Natural killer cell (primary cell): ENCODE measurements at regions of chr10 and their contacts with region 1.

Region 1: GRCh38 chr10:122980209-122981065 is at the start of gene PSTK:
- DNase-seq: peak; percentile 92 to 96
- ATAC-seq: peak; percentile 95 to 98 (median 95)
- H3K4me3 ChIP-seq: peak within 1 kb of the TSS; percentile 88
- H3K4me3 Mint-ChIP-seq: peak within 1 kb of the TSS; percentile 90
- H3K27ac ChIP-seq: peak within 1 kb of the TSS; percentile 94
- H3K27ac Mint-ChIP-seq: peak within 1 kb of the TSS; percentile 90 to 93
- H3K4me1 ChIP-seq: peaks cover 12% of the 10 kb centered on the region
- H3K4me1 Mint-ChIP-seq: peaks cover 16 to 17% of the 10 kb centered on the region in 2 donors
- H3K27me3 ChIP-seq: no peaks in the 10 kb centered on the region
- H3K27me3 Mint-ChIP-seq: peaks cover 9 to 15% of the 10 kb centered on the region in 2 donors
- CTCF ChIP-seq: peak; percentile 95
- total RNA-seq, gene PSTK: 10.6 to 13.8 (median 13.7) TPM

Region 2: DNA sequence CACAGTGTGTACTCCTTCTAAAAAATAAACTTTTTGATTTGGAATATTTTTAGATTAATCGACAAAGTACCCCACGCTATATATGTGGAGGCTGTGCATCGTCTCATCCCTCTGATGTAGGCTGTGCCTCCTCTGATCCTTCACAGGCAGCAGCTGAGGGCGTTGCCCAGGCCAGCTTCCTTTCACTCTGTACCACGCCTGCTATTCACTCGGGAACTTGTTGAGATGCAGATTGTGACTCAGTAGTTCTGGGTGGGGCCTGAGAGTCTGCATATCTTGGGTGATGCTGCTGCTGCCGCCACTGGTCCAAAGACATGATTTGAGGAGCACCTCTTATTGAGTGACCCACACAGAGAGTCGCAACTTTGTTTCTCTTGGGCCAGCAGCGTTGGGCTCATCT is 272.9 kb before region 1 on chr10:
- intact Hi-C with region 1: no loop called
- DNase-seq: no peak
- ATAC-seq: no peak
- H3K4me3 ChIP-seq: no peak overlapping the region
- H3K4me3 Mint-ChIP-seq: no peak overlapping the region
- H3K27ac ChIP-seq: no peak overlapping the region
- H3K27ac Mint-ChIP-seq: no peak overlapping the region
- H3K4me1 ChIP-seq: no peaks in the 10 kb centered on the region
- H3K4me1 Mint-ChIP-seq: peaks cover 0 to 5% of the 10 kb centered on the region in 2 donors
- H3K27me3 ChIP-seq: peaks cover 2% of the 10 kb centered on the region
- H3K27me3 Mint-ChIP-seq: peaks cover 12 to 13% of the 10 kb centered on the region in 2 donors
- CTCF ChIP-seq: no peak

Region 3: GRCh38 chr10:122879339-122880273 is 100.8 kb before region 1 on chr10 and contains the start of gene FAM24B:
- intact Hi-C with region 1: loop called (anchors 1 kb)
- DNase-seq: peak; percentile 84 to 99
- ATAC-seq: peak; percentile 88 to 91 (median 90)
- H3K4me3 ChIP-seq: peak within 1 kb of the TSS; percentile 61
- H3K4me3 Mint-ChIP-seq: peak within 1 kb of the TSS; percentile 93
- H3K27ac ChIP-seq: peak within 1 kb of the TSS; percentile 64
- H3K27ac Mint-ChIP-seq: peak within 1 kb of the TSS; percentile 83 to 93
- H3K4me1 ChIP-seq: peaks cover 11% of the 10 kb centered on the region
- H3K4me1 Mint-ChIP-seq: peaks cover 38 to 42% of the 10 kb centered on the region in 2 donors
- H3K27me3 ChIP-seq: no peaks in the 10 kb centered on the region
- H3K27me3 Mint-ChIP-seq: no peaks in the 10 kb centered on the region
- CTCF ChIP-seq: no peak
- total RNA-seq, gene FAM24B: 6.1 to 12.6 (median 8.5) TPM

Region 4: GRCh38 chr10:122953827-122954730 is 26.4 kb before region 1 on chr10 and contains the start of gene C10orf88:
- intact Hi-C with region 1: loop called (anchors 1 kb)
- DNase-seq: peak; percentile 92 to 100
- ATAC-seq: peak; percentile 93 to 97 (median 94)
- H3K4me3 ChIP-seq: peak within 1 kb of the TSS; percentile 87
- H3K4me3 Mint-ChIP-seq: peak within 1 kb of the TSS; percentile 92
- H3K27ac ChIP-seq: peak within 1 kb of the TSS; percentile 66
- H3K27ac Mint-ChIP-seq: peak within 1 kb of the TSS; percentile 84 to 92
- H3K4me1 ChIP-seq: peaks cover 16% of the 10 kb centered on the region
- H3K4me1 Mint-ChIP-seq: peaks cover 22 to 28% of the 10 kb centered on the region in 2 donors
- H3K27me3 ChIP-seq: no peaks in the 10 kb centered on the region
- H3K27me3 Mint-ChIP-seq: peaks cover 0 to 7% of the 10 kb centered on the region in 2 donors
- CTCF ChIP-seq: no peak
- total RNA-seq, gene C10orf88: 6.1 to 8.5 (median 7.2) TPM

Region 5: DNA sequence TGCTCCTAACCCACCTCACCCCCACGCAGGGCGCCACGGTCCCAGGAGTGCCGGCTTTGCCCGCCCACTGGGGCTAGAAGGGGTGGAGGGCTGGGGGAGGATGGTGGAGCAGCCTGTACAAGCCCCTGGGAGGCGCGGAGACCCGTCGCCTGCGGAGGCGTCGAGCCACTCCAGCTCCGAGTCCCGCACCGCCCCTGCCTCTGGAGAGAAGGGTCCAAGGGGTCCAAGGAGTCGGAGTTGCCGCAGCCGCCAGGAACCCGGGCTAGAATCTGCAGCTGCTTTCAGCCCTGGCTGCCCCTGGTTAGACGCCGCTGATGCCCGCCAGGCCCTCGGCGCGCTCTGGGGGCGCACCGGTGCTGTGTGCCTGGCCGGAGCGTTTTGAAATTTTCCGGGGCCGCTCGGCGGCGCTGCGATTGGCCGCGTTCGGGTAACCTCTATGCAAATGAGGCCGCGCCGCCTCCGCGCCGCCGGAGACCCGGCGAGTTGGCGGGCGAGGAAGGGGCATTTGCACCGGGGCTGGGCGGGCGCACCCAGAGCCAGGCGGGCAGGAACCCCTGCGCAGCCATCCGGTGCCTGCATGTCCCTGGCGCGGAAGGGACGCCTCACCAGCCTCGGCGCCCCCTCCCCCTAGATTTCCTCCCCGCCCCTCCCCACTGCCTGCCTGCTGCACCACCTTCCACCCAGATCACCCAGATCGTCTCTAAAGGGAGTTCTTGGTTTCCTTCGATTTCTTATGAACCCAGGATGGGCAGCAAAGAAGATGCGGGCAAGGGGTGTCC is 167.4 kb after region 1 on chr10 and contains the start of gene HMX2:
- intact Hi-C with region 1: no loop called
- DNase-seq: peak in 1 of 2 donors; percentile 56
- ATAC-seq: peak in 1 of 3 donors; percentile 49
- H3K4me3 ChIP-seq: no peak within 1 kb of the TSS
- H3K4me3 Mint-ChIP-seq: peak within 1 kb of the TSS; percentile 76
- H3K27ac ChIP-seq: no peak within 1 kb of the TSS
- H3K27ac Mint-ChIP-seq: peak within 1 kb of the TSS in 1 of 2 donors; percentile 9
- H3K4me1 ChIP-seq: peaks cover 47% of the 10 kb centered on the region
- H3K4me1 Mint-ChIP-seq: peaks cover 7 to 24% of the 10 kb centered on the region in 2 donors
- H3K27me3 ChIP-seq: peaks cover 86% of the 10 kb centered on the region
- H3K27me3 Mint-ChIP-seq: peaks cover 66% of the 10 kb centered on the region in 2 donors
- CTCF ChIP-seq: no peak
- total RNA-seq, gene HMX2: not detected